Astrocyte of the cerebellum (primary cell): ENCODE measurements at regions of chr1 and their contacts with region 1.

Region 1: GRCh38 chr1:230839173-230839572 is 29.1 kb downstream of the C1orf198 start:
- DNase-seq: no peak
- H3K4me3 ChIP-seq: no peak overlapping the region
- CTCF ChIP-seq: no peak

Region 2: DNA sequence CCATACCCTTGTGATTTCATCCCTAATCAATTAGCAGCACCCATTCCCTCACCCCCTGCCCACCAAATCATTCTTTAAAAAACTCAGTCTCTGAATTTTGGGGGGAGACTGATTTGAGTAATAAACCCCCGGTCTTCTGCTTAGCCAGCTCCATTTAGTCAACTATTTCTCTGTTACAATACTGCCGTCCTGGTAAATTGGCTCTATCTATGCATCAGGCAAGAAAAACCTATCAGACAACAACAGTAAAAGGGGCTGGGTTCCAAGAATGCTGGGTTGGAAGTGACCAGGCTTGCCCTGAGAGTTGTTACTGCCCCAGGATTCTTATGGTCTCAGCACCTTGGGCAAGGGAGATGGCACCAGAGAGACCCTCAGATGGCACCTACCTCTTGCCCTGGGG is 45.5 kb after region 1 on chr1:
- in situ Hi-C with region 1: loop called (anchors 5 kb)
- DNase-seq: no peak
- H3K4me3 ChIP-seq: no peak overlapping the region
- CTCF ChIP-seq: no peak

Region 3: DNA sequence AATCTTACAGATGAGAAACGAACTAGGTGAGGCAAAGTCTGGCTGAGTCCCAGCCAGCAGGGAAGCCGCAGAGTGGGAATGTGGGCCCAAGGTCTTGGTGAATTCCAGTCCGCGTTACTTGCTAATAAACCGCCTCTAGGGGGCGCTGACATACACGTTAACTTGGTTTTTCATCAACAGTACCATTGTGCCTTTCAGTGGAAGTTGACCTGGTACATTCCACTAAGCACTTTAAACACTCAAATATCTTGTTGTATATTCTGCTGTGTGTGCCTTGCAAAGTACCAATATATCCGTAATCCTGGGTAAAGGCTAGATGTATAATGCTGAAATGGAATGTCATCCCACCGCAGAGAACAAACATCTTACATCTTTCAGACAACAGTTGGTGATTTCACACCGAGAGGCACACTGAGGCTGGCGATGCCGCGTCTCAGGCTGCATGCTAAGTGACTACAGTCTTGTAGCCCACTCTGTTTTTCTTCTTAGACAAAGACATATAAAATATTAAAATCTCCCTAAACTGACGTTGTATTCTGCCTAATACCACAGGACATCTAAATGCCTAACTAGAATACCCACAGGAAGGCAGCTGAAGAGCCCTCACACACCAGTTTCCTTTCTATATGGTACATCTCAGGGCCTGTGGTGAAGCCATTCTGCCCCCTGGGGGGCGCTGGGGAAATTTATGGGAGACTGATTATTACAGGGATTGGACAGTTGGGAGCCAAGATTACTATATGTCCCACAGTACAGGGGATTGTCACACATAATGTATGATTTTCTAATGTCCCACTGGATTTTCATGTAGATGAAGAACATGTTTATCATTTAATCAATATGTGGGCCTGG is 78.3 kb after region 1 on chr1:
- in situ Hi-C with region 1: loop called (anchors 5 kb)
- DNase-seq: peak; percentile 58
- H3K4me3 ChIP-seq: no peak overlapping the region
- CTCF ChIP-seq: peak; percentile 68